Ascending aorta (tissue), 2 donors: ENCODE measurements at regions of chr3 and their contacts with region 1.

Region 1: DNA sequence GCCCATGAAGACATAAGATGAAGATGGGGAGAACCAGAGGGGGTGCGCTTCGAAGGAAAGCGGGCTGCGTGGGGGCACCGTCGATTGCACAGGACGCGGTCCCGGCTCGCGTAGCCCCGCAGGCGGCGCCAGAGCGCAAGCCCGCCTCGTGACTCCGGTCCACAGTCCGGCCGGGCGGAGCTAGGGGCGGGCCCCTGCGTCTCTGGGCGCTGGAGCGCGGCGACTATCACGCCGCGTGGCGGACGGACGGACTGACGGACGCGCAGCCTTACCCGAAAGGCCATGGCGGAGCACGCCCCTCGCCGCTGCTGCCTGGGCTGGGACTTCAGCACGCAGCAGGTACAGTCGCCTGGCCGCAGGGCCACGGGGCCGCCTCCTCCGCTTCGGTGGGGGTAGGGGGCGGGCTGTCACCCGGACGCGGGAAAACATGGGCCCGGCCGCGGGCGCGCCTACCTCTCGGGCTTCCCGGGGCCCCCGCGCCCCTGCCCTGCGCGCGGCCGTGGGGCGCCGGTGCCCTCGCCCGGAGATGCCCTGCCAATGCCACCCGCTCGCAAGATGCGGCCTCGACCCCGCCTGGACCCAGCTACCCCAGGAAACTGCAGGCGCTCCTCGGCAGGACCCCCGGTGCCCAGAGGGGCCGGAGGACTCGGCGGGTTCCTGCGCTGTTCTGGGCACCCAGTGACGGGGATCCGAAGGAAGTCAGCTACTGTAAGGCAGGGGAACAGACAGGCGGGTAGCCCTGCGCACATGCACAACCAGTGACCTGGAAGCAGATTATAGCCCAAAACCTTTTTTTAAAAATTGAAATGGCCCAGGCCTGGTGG is at the start of gene XYLB:
- DNase-seq: peak; percentile 19 to 89
- H3K4me3 ChIP-seq: peak within 1 kb of the TSS; percentile 70 to 73
- H3K27ac ChIP-seq: peak within 1 kb of the TSS in 1 of 2 donors; percentile 4
- H3K4me1 ChIP-seq: peaks cover 0 to 3% of the 10 kb centered on the region in 2 donors
- H3K27me3 ChIP-seq: no peaks in the 10 kb centered on the region
- CTCF ChIP-seq: peak; percentile 87 to 91 (median 87)
- total RNA-seq, gene XYLB: 0.43 TPM

Region 2: DNA sequence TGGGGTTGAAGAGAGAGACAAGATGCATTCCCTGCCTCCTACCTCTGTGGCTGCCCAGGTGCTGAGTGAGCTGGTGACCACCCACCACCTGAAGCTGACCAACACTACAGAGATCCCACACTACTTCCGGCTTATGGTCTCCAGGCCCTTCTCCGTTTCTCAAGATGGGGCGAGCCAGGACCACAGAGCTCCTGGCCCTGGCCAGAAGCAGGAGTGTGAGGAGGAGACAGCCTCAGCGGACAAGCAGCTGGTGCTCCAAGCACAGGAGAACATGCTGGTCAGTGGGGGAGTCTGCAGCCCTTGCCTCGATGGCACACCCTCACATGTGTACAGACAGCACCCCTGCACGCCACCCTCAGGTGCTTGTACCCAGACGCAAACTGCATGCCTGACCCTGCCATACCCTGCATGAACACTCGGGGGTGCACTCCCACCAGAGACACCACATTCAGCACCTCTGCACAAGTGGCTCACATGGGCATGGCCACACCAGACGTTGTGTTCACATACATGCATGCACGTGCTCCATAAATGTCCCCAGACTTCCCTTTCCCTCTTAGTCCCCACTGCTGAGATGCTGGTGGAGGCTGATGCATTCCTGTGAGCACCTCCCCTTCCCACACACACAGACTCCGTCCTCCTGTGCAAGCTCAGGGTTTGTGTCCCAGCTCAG is 228.9 kb before region 1 on chr3:
- intact Hi-C with region 1: loop called (anchors 5 kb)
- DNase-seq: peak in 1 of 2 donors; percentile 73
- H3K4me3 ChIP-seq: no peak overlapping the region
- H3K27ac ChIP-seq: no peak overlapping the region
- H3K4me1 ChIP-seq: no peaks in the 10 kb centered on the region
- H3K27me3 ChIP-seq: no peaks in the 10 kb centered on the region
- CTCF ChIP-seq: peak; percentile 50 to 66 (median 62)

Region 3: DNA sequence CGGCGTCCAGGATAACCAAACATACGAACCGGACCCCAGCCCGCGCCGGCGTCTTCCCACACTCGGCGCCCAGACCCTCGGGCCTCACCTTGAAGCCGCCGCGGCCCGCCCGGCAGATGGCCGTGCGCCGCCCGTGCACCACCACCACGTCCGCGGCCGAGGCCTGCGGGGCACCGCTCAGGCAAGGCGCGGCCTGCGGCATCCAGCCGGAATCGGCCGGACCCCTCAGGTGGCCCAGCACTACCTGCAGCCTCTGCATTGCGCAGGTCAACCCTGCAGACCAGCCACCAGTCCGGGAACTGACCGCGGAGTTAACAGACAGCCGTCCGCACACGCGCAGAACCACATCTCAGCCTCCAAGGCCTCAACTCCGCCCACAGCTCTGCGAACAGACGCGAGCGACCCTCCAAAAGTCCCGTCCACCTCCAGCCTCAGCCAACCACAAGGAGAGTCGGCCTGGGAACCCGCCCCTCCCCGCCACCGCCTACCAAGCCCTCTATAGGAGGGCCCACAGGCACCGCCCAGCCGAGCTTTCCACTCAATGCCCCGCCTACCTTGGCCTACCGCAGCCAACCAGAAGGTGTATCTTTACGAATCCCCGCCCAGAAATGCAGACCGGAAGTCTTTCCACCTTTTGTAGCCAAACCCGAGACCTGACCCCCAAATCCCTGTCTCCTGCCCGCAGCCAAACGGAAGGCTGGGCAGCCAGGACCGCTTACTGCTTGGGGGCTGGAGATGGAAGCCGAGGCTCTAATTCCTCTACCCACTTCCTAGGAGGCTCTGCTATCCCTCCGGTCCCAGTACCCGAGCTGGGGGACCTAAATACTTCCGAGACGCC is 209.8 kb before region 1 on chr3 and contains the start of gene ACAA1:
- intact Hi-C with region 1: loop called (anchors 5 kb)
- DNase-seq: peak; percentile 99 to 100
- H3K4me3 ChIP-seq: peak within 1 kb of the TSS; percentile 87 to 98
- H3K27ac ChIP-seq: peak within 1 kb of the TSS; percentile 90 to 97
- H3K4me1 ChIP-seq: peaks cover 0 to 28% of the 10 kb centered on the region in 2 donors
- H3K27me3 ChIP-seq: no peaks in the 10 kb centered on the region
- CTCF ChIP-seq: no peak
- total RNA-seq, gene ACAA1: 52.6 TPM

Region 4: GRCh38 chr3:38317155-38317759 is 29.5 kb before region 1 on chr3:
- intact Hi-C with region 1: no loop called
- DNase-seq: no peak
- H3K4me3 ChIP-seq: no peak overlapping the region
- H3K27ac ChIP-seq: no peak overlapping the region
- H3K4me1 ChIP-seq: no peaks in the 10 kb centered on the region
- H3K27me3 ChIP-seq: no peaks in the 10 kb centered on the region
- CTCF ChIP-seq: no peak

Region 5: GRCh38 chr3:38396861-38397260 is 50.1 kb after region 1 on chr3:
- intact Hi-C with region 1: no loop called
- DNase-seq: no peak
- H3K4me3 ChIP-seq: no peak overlapping the region
- H3K27ac ChIP-seq: no peak overlapping the region
- H3K4me1 ChIP-seq: no peaks in the 10 kb centered on the region
- H3K27me3 ChIP-seq: no peaks in the 10 kb centered on the region
- CTCF ChIP-seq: no peak

Region 6: GRCh38 chr3:38479431-38480092 is 132.8 kb after region 1 on chr3:
- intact Hi-C with region 1: loop called (anchors 1 kb)
- DNase-seq: peak in 1 of 2 donors; percentile 84
- H3K4me3 ChIP-seq: no peak overlapping the region
- H3K27ac ChIP-seq: no peak overlapping the region
- H3K4me1 ChIP-seq: no peaks in the 10 kb centered on the region
- H3K27me3 ChIP-seq: no peaks in the 10 kb centered on the region
- CTCF ChIP-seq: peak; percentile 62 to 83 (median 78)